ENCODE measurements at regions of chr16 and their contacts with region 1.

Region 1: DNA sequence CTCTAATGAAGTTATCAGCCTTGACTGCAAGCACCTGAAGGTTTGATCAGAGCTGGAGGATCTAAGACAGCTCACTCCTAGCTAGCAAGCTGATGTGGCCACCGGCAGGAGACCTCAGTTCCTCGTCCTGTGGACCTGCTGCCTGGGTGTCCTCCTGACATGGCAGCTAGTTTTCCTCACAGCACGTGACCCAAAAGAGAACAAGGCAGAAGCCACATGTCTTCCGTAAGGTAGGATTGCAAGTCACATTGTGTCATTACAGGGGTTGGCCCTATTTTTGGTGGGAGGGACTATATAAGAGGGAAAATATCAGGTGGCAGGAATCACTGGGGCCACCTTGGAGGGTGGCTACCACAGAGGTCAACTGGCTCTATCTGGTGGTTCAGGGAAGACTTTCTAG is 18.1 kb upstream of the WWOX start:
- DNase-seq: no peak
- CTCF ChIP-seq: no peak

Region 2: GRCh38 chr16:78099372-78100161 is 18.2 kb after region 1 on chr16 and contains the start of gene WWOX:
- CTCF ChIA-PET with region 1: interaction called, 12 read pairs
- POLR2A ChIA-PET with region 1: no interaction called
- DNase-seq: peak; percentile 92
- CTCF ChIP-seq: peak; percentile 89

Measured in GM10248 (cell line).